H1 (cell line): ENCODE measurements at regions of chr3 and their contacts with region 1.

Region 1: GRCh38 chr3:13657660-13658435 is 108.9 kb downstream of the FBLN2 start:
- DNase-seq: peak in 1 of 2 experiments; percentile 86
- H3K4me3 ChIP-seq: no peak overlapping the region; a peak in 1 of 8 replicates
- H3K27ac ChIP-seq: no peak overlapping the region
- H3K4me1 ChIP-seq: peaks cover 0 to 8% (median 6%) of the 10 kb centered on the region in 4 experiments; a peak in 5 of 7 replicates
- H3K27me3 ChIP-seq: peaks cover 1 to 31% (median 27%) of the 10 kb centered on the region in 4 experiments
- CTCF ChIP-seq: peak in 2 of 3 experiments; percentile 95 to 97; a peak in 3 of 4 replicates
- EP300 ChIP-seq: no peak
- POLR2A ChIP-seq: no peak
- RAD21 ChIP-seq: peak; percentile 95 to 96

Region 2: DNA sequence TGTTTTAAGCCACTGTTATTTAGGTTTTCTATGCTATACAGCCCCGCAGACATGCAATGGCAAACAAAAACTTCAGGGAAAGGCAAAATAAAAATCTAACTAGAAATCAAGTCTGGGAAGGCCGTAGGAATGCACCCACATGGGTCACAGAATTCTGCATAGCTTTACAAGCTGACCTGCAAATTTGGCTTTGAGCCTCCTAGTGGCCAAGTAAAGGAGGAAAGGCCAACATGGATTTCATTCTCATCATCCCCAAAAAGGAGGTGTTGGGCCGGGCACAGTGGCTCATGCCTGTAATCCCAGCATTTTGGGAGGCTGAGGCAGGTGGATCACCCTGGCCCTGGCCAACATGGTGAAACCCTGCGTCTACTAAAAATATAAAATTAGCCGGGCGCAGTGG is 15.4 kb after region 1 on chr3:
- CTCF ChIA-PET with region 1: interaction called, 116 read pairs
- POLR2A ChIA-PET with region 1: no interaction called
- DNase-seq: no peak
- H3K4me3 ChIP-seq: no peak overlapping the region
- H3K27ac ChIP-seq: no peak overlapping the region
- H3K4me1 ChIP-seq: no peaks in the 10 kb centered on the region
- H3K27me3 ChIP-seq: no peaks in the 10 kb centered on the region
- CTCF ChIP-seq: peak; percentile 8 to 71 (median 56)
- EP300 ChIP-seq: no peak
- POLR2A ChIP-seq: no peak
- RAD21 ChIP-seq: peak; percentile 34 to 53

Region 3: DNA sequence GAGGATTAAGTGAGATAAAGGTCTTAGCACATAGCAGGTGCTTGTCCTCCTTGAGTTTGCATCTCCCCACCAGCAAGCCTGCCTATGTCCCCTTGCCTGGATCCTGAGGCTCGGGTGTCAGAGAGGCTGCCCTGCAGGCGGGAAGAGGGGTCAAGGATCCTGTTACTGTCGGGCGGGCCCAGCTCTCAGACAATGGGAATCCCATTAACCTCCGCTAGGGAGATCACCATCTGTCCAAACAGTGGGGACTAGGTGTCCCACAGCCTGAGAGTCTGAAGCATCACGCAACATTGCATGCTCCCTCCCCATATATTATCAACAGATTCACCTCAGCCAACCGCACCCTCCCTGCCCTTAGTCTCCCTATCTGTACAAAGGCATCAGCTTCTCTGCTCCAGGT is 42.5 kb after region 1 on chr3:
- CTCF ChIA-PET with region 1: interaction called, 12 read pairs
- POLR2A ChIA-PET with region 1: no interaction called
- DNase-seq: no peak
- H3K4me3 ChIP-seq: no peak overlapping the region
- H3K27ac ChIP-seq: no peak overlapping the region
- H3K4me1 ChIP-seq: peaks cover 5 to 15% (median 7%) of the 10 kb centered on the region in 4 experiments
- H3K27me3 ChIP-seq: no peaks in the 10 kb centered on the region
- CTCF ChIP-seq: no peak
- EP300 ChIP-seq: no peak
- POLR2A ChIP-seq: no peak
- RAD21 ChIP-seq: no peak

Region 4: GRCh38 chr3:13782501-13782900 is 124.7 kb after region 1 on chr3:
- CTCF ChIA-PET with region 1: interaction called, 20 read pairs
- POLR2A ChIA-PET with region 1: no interaction called
- DNase-seq: no peak
- H3K4me3 ChIP-seq: no peak overlapping the region
- H3K27ac ChIP-seq: no peak overlapping the region
- H3K4me1 ChIP-seq: peaks cover 0 to 16% (median 9%) of the 10 kb centered on the region in 4 experiments; a peak in 5 of 7 replicates
- H3K27me3 ChIP-seq: 0 out of 7 replicates have a peak, but pooled peaks cover 0 to 2% (median 0%) of the 10 kb centered on the region in 4 experiments
- CTCF ChIP-seq: no peak
- EP300 ChIP-seq: no peak
- POLR2A ChIP-seq: no peak
- RAD21 ChIP-seq: no peak

Region 5: DNA sequence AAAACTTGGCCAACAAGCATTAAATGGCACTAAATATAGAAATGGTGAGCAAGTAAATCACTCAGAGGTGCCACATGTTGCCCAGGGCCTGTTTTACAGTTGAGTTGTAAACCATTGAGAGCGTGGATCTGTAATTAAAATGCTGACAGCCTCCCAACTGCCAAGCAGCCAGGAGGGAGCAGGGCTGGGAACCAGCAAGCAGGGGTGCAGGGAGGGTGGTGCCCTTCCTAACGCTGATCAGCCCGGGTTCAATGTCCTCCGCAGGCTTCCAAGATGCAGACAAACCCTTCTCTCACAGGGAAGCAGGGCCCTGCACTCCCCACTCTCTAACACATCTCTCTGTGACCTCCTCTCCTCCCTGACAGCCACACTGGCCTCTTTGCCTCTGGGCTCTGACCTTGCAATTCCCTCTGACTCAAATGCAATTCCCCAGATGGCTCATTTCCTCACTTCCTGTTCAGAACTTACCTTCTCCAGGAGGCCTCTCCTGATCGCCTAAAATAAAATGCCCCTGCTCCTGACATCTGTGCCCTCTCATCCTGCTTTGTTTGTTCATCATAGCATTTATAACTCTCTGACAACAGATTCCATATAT is 182.0 kb after region 1 on chr3:
- CTCF ChIA-PET with region 1: interaction called, 19 read pairs
- POLR2A ChIA-PET with region 1: no interaction called
- DNase-seq: no peak
- H3K4me3 ChIP-seq: no peak overlapping the region
- H3K27ac ChIP-seq: no peak overlapping the region
- H3K4me1 ChIP-seq: no peaks in the 10 kb centered on the region
- H3K27me3 ChIP-seq: no peaks in the 10 kb centered on the region
- CTCF ChIP-seq: no peak
- EP300 ChIP-seq: no peak
- POLR2A ChIP-seq: no peak
- RAD21 ChIP-seq: no peak

Region 6: DNA sequence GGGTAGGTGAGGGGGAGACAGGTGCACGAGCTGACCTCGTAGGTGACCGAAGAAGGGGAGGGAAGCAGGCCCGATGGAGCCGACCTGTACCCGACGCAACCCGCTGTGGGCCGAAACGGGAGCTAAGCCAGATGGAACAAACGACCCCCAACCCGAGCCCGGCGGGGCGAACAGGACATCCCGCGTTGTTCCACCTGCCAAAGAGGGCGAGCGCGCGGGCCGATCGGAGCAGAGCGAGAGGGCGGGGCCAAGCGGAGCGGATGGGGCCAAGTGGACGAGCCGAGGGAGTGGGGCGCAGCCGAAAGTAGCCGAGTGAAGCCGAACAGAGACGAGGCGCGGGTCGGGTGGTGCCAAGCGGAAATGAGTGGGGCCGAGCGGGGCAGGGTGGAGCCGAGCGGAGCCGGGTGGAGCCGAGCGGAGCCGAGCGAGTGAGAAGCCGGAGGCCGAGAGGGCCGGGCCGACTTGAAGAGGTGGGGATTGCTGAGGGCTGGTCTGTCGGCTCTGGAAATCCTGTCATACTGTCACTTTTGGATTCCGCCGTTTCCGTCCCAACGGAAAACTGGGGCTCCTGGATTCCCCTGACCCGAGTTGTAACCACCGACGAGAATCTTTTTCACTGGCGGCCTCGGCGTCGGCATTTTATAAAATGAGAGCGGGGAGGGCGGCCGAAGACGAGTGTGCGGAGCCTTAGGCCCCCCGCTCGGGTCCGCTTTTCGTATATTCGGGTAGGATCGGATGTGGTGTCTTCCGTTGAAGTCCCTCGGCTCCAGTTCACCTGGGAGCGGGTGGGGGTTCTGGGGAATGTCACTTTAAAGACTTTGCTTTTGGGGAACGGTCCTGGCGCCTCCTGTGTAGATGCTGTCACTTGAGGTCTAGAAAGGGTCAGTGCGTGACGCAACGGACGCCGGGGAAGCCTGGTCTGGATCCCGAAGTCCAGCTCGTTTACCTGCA is 237.6 kb after region 1 on chr3:
- CTCF ChIA-PET with region 1: interaction called, 765 read pairs
- POLR2A ChIA-PET with region 1: no interaction called
- DNase-seq: peak; percentile 82 to 98
- H3K4me3 ChIP-seq: peak overlapping the region; percentile 57 to 79 (median 64)
- H3K27ac ChIP-seq: no peak overlapping the region
- H3K4me1 ChIP-seq: peaks cover 0 to 13% (median 8%) of the 10 kb centered on the region in 4 experiments; a peak in 4 of 7 replicates
- H3K27me3 ChIP-seq: peaks cover 8 to 24% (median 20%) of the 10 kb centered on the region in 4 experiments
- CTCF ChIP-seq: no peak
- EP300 ChIP-seq: no peak
- POLR2A ChIP-seq: no peak
- RAD21 ChIP-seq: no peak

Region 7: DNA sequence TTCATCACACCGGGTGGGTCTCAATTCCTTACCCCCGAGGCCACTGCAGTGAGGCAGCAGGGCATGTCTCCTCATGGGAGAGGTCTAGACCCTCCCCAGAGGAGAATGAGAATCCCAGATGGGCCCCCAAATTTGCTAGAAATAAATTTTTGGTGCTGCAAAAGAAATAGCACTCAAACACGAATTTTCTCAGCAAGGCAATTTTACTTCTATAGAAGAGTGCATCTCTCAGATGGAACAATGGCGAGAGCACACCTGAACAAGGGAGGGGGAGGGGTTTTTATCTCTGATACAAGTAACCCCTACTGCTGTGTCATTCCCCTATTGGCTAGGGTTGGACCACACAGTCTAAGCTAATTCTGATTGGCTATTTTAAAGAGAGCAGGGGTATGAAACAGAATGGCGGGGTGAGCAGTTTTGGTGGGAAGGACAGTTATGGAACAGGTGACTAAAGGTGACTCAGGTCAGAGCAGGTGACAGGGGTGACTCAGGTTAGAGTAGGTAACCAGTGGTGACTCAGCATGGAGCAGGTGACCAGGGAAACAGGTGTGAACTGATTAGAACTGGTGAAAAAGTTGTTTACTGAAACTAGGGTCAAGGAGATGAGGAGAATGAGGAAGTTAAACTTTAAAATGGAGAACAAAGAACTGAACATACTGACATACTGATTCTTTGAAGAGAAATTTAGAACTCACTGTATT is 315.0 kb after region 1 on chr3:
- CTCF ChIA-PET with region 1: no interaction called
- POLR2A ChIA-PET with region 1: no interaction called
- DNase-seq: no peak
- H3K4me3 ChIP-seq: no peak overlapping the region
- H3K27ac ChIP-seq: no peak overlapping the region
- H3K4me1 ChIP-seq: no peaks in the 10 kb centered on the region
- H3K27me3 ChIP-seq: no peaks in the 10 kb centered on the region
- CTCF ChIP-seq: no peak
- EP300 ChIP-seq: no peak
- POLR2A ChIP-seq: no peak
- RAD21 ChIP-seq: no peak